GM10248 (cell line): ENCODE measurements at regions of chr16 and their contacts with region 1.

Region 1: DNA sequence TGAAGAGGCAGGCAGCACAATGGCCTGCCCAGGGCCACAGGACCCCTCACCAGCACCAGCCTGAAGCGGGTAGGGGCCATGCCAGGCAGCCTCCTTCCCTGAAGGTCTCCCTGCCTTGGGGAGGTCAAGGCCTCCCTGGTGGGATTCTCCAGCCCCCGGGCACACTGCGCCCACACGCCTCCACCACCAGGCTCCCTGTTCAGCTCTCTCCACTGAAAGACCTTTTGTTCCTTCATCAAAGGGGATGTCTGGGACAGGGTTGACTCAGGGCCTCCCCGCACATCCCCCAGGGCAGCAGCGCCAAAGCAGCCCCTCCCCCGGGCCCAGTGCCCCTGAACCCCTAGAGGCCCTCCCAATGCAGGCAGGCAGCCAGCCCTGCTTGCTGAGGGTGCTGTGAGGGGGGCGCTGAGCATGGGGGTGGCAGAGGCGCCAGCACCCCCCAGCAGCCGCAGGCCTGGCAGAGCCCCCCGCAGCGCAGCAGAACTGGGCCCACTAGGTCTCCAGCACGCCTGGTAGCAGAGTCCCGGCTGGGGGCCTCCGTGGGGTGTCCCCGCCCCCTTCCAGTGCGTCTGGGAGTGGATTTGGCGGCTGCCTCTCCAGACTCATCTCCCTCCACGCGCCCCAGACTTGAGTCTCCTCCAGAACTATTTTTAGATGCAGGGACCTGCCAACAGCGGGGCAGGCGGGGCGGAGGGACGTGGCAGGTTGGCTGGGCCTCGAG is 13.1 kb downstream of the BCAR1 start:
- DNase-seq: no peak
- CTCF ChIP-seq: no peak

Region 2: GRCh38 chr16:75116081-75116910 is 122.0 kb before region 1 on chr16 and contains the start of gene LDHD:
- CTCF ChIA-PET with region 1: no interaction called
- POLR2A ChIA-PET with region 1: no interaction called
- DNase-seq: no peak
- CTCF ChIP-seq: no peak

Region 3: GRCh38 chr16:75198135-75198600 is 40.1 kb before region 1 on chr16:
- CTCF ChIA-PET with region 1: interaction called, 44 read pairs
- POLR2A ChIA-PET with region 1: no interaction called
- DNase-seq: no peak
- CTCF ChIP-seq: no peak

Region 4: DNA sequence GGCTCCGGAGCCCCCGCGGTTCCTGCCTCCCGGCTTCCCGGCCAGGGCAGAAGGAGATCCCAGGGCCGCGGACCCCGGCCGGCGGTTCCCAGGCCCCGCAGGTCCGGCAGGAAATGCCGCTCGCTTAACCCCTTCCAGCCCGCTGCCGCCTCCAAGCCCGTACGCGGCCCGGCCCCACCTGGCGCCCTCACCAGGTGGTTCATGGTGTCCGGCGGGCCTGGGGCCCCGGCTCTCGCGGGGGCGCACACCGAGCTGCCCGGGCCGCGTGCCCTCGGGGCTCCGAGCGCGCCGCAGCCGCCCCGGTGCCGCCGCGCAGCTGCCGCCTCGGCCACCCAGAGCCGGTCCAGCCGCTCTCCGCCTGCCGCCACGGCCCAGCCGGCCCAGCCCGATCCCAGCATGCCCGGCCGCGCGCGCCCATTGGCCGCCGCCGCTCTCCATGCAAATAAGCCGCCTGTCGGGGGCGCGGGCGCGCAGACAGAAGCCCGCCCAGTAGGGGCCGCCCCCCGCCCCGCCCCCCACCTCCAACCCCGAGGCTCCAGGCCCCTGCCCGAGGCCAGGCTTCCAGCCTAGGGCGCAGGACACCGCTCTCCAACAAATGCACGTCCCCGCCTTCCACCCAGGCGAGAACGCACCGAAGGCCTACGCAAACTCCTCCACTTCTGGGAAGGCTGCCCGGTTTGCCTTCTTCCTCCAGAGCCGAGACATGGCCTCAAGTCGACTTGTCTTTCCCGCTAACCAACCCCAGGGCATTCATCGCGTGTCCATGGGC is 13.2 kb after region 1 on chr16 and contains the start of gene BCAR1:
- CTCF ChIA-PET with region 1: interaction called, 62 read pairs
- POLR2A ChIA-PET with region 1: no interaction called
- DNase-seq: peak; percentile 93
- CTCF ChIP-seq: peak; percentile 12

Region 5: DNA sequence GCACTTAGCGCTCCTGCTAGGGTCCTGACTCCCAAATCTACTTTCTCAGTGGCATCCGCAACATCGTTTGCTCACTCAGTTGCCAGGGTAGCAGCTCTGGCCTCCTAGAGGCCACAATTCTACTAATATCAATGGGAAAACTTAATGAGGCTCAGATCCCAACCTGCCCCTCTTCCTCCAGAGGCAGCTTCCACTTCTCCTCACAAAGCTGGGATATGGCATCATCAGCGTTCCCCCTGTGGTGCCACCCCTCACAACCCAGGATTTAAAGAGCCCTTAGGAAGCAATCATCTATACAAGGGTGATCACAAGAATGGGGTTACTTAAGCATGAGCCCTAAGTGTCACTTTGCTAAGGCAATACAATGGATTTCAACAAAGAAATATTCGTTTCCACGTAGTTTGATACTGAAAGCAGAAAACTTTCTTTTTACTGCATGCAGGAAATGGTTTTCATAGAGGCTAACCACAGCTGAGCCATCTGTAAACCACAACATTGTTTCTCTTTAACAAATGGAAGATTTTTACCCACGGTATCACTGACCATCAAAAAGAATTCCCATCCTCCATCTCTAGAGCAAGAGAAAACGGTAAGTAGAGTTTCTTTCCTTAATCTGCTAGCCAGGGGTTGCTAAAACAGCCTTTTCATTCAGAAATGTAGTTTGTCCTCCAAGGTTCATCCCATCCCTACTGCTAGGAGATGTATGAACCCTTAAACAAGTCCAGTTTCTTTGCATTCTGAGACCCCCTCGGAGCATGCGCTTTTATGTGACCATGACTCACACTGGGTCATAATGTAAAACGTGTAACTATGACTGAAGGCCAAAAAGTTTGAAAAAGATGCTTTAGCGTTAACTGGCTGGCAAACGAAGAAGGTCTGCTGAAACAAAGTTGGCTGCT is 81.5 kb after region 1 on chr16:
- CTCF ChIA-PET with region 1: interaction called, 11 read pairs
- POLR2A ChIA-PET with region 1: no interaction called
- DNase-seq: peak; percentile 65
- CTCF ChIP-seq: no peak

Region 6: DNA sequence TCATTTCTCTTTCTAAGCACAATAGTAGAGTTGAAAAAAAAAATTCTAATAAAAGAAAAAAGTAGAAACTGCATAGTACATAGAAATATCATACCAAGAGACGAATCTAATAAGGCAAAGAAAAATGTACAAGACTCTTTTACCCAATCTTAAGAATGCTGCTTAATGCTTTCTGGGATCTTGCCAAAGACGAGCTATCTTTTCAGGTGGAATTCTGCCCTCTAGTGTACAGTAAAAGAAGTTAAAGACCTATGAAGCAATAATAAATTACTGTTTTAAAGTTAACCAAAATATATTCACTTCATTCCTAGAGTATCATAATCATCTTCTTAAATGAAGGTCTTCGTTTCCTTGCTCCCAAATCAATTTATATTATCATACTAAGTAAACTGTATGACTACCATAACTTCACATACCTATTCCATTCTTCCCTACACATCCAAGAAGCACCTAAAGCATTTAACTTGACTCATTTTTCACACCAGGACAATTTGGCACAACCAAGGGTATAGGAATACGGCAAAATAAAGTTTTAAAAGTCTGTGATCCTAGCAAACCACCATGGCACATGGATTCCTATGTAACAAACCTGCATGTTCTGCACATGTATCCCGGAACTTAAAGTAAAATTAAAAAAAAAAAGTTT is 147.3 kb after region 1 on chr16:
- CTCF ChIA-PET with region 1: interaction called, 61 read pairs
- POLR2A ChIA-PET with region 1: no interaction called
- DNase-seq: peak; percentile 50
- CTCF ChIP-seq: peak; percentile 43

Region 7: DNA sequence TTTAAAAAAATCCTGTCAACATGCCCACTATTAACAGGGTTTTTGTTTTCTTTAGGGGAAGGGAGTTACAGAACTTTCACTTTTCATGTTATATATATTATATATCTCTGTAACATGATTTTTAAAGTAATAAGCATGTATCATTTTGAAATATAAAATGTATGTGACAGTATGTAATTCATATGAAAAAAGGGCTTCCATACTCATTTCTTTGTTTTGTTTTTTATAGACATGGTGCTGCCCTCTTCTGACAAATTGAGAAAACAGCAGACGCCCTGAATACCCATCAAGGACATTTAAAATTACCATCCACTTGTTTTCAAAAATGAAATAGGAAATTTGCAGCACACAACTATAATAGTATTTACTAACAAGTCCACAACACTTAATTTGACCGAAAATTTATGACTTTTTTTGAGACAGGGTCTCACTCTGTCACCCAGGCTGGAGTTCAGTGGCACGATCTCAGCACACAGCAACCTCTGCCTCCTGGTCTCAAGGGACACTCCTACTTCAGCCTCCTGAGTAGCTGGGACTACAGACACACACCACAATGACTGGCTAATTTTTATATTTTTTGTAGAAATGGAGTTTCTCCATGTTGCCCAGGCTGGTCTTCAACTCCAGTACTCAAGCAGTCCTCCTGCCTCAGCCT is 164.7 kb after region 1 on chr16:
- CTCF ChIA-PET with region 1: interaction called, 41 read pairs
- POLR2A ChIA-PET with region 1: no interaction called
- DNase-seq: peak; percentile 46
- CTCF ChIP-seq: peak; percentile 53

Region 8: GRCh38 chr16:75432828-75433731 is 194.8 kb after region 1 on chr16 and contains the start of gene CFDP1:
- CTCF ChIA-PET with region 1: no interaction called
- POLR2A ChIA-PET with region 1: no interaction called
- DNase-seq: peak; percentile 98
- CTCF ChIP-seq: peak; percentile 2